ENCODE measurements at regions of chr17 and their contacts with region 1.

Region 1: GRCh38 chr17:75412455-75413317 is 7.2 kb upstream of the GRB2 start:
- DNase-seq: peak; percentile 41 to 86
- H3K4me3 ChIP-seq: no peak overlapping the region
- CTCF ChIP-seq: peak in 1 of 3 donors; percentile 72
- POLR2A ChIP-seq: no peak

Region 2: DNA sequence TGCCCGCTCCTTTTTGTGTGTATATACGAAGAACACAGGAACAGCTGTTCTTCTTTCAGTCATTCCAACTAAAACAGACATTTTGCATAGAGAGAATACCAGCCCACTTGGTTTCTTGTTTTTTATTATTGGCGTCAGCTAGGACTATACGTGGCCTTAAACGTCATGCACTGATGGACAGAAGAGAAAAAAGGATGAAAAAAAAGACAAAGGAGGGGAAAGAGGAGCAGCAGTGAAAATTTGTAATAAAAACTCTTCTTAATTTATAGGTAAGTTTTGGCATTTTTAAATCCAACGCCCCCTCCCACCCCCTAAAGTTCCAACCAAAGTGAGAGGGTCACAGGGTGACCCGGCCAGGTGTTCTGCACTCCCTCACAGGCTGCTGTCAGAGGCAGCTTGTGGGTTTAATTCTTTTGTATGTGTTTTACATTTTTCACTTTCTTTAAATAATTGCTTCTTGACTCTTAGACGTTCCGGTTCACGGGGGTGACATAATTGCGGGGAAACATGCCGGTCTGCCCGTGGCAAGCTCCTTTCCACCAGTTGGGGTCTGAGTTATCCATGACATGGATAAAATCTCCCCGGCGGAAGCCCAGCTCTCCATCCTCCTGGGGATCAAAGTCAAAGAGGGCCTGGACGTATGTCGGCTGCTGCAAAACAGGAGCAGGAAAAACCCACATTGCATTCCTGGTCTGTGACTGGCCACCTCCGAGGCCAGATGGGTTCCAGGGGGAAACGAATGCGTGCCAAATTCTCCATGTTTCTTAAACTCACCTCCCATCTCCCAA is 92.6 kb before region 1 on chr17:
- intact Hi-C with region 1: loop called (anchors 5 kb)
- DNase-seq: no peak
- H3K4me3 ChIP-seq: no peak overlapping the region
- CTCF ChIP-seq: no peak
- POLR2A ChIP-seq: no peak

Region 3: GRCh38 chr17:75652915-75653549 is 240.3 kb after region 1 on chr17:
- intact Hi-C with region 1: no loop called
- DNase-seq: no peak
- H3K4me3 ChIP-seq: no peak overlapping the region
- CTCF ChIP-seq: no peak
- POLR2A ChIP-seq: no peak

Measured in lower leg skin (tissue), 4 donors.